ENCODE measurements at regions of chr18 and their contacts with region 1.

Region 1: GRCh38 chr18:66377291-66377690 is 226.6 kb downstream of the CDH19 start:
- DNase-seq: no peak
- ATAC-seq: no peak
- H3K4me3 ChIP-seq: no peak overlapping the region
- H3K27ac ChIP-seq: no peak overlapping the region
- H3K4me1 ChIP-seq: no peaks in the 10 kb centered on the region
- H3K27me3 ChIP-seq: no peaks in the 10 kb centered on the region
- CTCF ChIP-seq: no peak

Region 2: DNA sequence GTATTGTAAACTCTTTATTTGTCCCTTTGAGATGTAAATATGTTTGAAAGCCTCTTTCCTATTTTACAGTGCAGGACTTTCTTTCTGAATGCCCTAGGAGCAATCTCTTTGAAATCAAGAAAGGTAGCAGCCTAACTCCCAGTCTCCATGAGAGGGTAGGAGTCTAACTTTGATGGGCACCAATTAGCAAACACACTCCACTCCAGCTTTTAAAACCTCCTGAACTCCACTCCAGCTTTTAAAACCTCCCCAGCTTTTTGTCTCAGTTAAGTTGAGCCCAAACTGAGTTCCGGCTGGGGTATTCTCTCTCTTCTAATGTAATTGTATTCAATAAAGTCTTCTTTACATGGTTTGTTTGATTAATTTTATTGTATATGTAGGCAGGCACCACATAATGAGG is 1120.1 kb before region 1 on chr18:
- intact Hi-C with region 1: no loop called
- DNase-seq: no peak
- ATAC-seq: no peak
- H3K4me3 ChIP-seq: no peak overlapping the region
- H3K27ac ChIP-seq: no peak overlapping the region
- H3K4me1 ChIP-seq: no peaks in the 10 kb centered on the region
- H3K27me3 ChIP-seq: no peaks in the 10 kb centered on the region
- CTCF ChIP-seq: no peak

Region 3: DNA sequence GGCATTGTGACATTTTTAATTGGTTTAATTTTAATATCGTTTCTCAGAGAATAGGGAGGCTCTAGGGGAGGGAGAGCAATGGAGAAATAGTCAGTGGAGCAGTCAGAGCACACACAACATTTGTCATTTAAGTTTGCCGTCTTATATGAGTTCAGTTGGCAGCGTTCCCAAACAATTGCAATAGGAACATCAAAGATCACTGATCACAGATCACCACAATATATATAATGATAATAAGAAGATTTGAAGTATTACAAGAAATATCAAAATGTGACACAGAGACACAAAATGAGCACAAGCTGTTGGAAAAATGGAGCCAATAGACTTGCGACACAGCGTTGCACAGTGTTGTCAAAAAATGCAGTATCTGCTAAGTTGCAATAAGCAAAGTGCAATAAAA is 77.2 kb before region 1 on chr18:
- intact Hi-C with region 1: loop called in 1 of 3 experiments (anchors 10 kb)
- DNase-seq: no peak
- ATAC-seq: no peak
- H3K4me3 ChIP-seq: no peak overlapping the region
- H3K27ac ChIP-seq: no peak overlapping the region
- H3K4me1 ChIP-seq: no peaks in the 10 kb centered on the region
- H3K27me3 ChIP-seq: no peaks in the 10 kb centered on the region
- CTCF ChIP-seq: no peak